Activated CD4-positive, alpha-beta memory T cell treated with anti-CD3 and anti-CD28 coated beads for 36 hours (primary cell): ENCODE measurements at regions of chr16 and their contacts with region 1.

Region 1: GRCh38 chr16:24539291-24539849 is at the start of gene RBBP6:
- DNase-seq: peak; percentile 95
- H3K4me3 Mint-ChIP-seq: peak within 1 kb of the TSS; percentile 100
- H3K27ac Mint-ChIP-seq: peak within 1 kb of the TSS; percentile 100
- H3K4me1 Mint-ChIP-seq: peaks cover 17% of the 10 kb centered on the region
- H3K27me3 Mint-ChIP-seq: no peaks in the 10 kb centered on the region
- total RNA-seq, gene RBBP6: 74.6 to 76.1 TPM

Region 2: DNA sequence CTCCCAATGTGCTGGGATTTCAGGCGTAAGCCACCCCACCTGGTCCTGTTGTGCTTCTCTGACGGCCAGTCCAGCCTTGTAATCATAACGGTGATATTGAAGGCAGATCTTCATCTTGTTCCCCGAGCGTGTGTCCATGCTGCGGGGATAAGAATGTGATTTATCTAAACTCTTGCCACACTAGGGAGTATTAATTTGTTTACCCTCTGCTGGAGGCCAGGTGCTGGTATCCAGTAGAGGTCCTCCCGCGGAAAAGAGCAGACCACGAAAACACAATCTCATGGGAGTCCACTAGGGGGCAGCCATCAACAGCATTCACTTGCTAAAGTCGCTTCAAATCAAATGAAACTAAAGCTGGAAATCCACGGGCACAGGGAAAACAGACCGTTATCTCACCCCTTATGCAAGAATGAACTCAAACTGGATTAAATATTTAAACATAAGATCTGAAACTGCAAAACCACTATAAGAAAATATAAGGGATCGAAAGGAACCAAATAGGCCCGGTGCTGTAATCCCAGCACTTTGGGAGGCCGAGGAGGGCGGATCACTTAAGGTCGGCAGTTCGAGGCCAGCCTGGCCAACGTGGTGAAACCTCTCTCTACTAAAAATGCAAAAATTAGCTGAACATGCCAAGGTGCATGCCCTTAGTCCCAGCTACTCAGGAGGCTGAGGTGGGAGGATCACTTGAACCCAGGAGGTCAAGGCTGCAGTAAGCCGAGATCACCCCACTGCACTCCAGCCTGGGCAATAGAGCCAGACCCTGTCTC is 22.3 kb before region 1 on chr16:
- CTCF ChIA-PET with region 1: interaction called, 20 read pairs
- POLR2A ChIA-PET with region 1: no interaction called
- intact Hi-C with region 1: no loop called
- DNase-seq: peak; percentile 86
- H3K4me3 Mint-ChIP-seq: no peak overlapping the region
- H3K27ac Mint-ChIP-seq: no peak overlapping the region
- H3K4me1 Mint-ChIP-seq: peaks cover 5% of the 10 kb centered on the region
- H3K27me3 Mint-ChIP-seq: peaks cover 3% of the 10 kb centered on the region

Region 3: GRCh38 chr16:24668481-24669061 is 129.2 kb after region 1 on chr16:
- CTCF ChIA-PET with region 1: interaction called, 3 read pairs
- POLR2A ChIA-PET with region 1: interaction called, 7 read pairs
- intact Hi-C with region 1: loop called (anchors 1 kb)
- DNase-seq: peak; percentile 78
- H3K4me3 Mint-ChIP-seq: peak overlapping the region; percentile 64
- H3K27ac Mint-ChIP-seq: peak overlapping the region; percentile 90
- H3K4me1 Mint-ChIP-seq: peaks cover 51% of the 10 kb centered on the region
- H3K27me3 Mint-ChIP-seq: peaks cover 8% of the 10 kb centered on the region

Region 4: GRCh38 chr16:24729362-24729984 is 190.1 kb after region 1 on chr16 and contains the start of gene TNRC6A:
- CTCF ChIA-PET with region 1: no interaction called
- POLR2A ChIA-PET with region 1: interaction called, 5 read pairs
- intact Hi-C with region 1: loop called (anchors 2 kb)
- DNase-seq: peak; percentile 88
- H3K4me3 Mint-ChIP-seq: peak within 1 kb of the TSS; percentile 98
- H3K27ac Mint-ChIP-seq: peak within 1 kb of the TSS; percentile 98
- H3K4me1 Mint-ChIP-seq: peaks cover 49% of the 10 kb centered on the region
- H3K27me3 Mint-ChIP-seq: no peaks in the 10 kb centered on the region
- total RNA-seq, gene TNRC6A: 31.7 to 36.3 TPM

Region 5: GRCh38 chr16:25014500-25015147 is 475.3 kb after region 1 on chr16:
- CTCF ChIA-PET with region 1: no interaction called
- POLR2A ChIA-PET with region 1: interaction called, 3 read pairs
- intact Hi-C with region 1: loop called (anchors 10 kb)
- DNase-seq: peak; percentile 37
- H3K4me3 Mint-ChIP-seq: peak overlapping the region; percentile 95
- H3K27ac Mint-ChIP-seq: peak overlapping the region; percentile 90
- H3K4me1 Mint-ChIP-seq: peaks cover 73% of the 10 kb centered on the region
- H3K27me3 Mint-ChIP-seq: no peaks in the 10 kb centered on the region

Region 6: DNA sequence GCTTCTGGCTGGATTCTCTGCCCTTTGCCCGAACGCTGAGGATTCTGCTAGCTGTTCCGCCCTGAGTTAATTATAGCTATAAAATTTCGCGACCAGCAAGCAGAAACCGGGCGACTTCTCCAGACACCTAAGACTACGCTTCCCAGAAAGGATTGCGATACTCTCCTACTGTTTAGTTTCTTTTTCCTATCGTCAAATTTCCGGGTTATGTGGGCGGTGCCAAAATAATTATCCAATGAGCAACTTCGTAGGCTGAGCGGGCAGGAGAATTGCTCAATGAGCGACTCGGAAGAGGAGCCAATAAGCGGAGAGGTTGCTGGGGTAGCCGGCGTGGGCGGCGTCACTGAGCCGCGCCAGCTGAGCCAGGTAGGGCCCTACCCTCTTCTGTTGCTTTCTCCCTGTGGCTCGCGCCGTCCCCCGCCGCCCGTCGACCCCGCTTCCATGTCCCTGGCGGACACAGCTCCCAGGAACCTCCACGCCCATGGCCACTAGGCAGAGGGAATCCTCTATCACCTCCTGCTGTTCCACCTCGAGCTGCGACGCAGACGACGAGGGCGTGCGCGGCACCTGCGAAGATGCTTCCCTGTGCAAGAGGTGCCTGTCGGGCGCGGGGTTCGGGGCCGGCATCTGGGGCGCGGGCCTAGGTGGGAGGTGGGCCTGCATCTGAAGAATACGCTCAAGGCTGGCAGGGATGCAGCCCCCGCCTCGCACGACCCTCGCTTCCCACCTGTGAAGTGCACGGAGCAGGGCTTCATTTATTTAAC is 572.2 kb after region 1 on chr16 and contains the start of gene LCMT1:
- CTCF ChIA-PET with region 1: no interaction called
- POLR2A ChIA-PET with region 1: no interaction called
- intact Hi-C with region 1: loop called (anchors 5 kb)
- DNase-seq: peak; percentile 96
- H3K4me3 Mint-ChIP-seq: peak within 1 kb of the TSS; percentile 95
- H3K27ac Mint-ChIP-seq: peak within 1 kb of the TSS; percentile 94
- H3K4me1 Mint-ChIP-seq: peaks cover 58% of the 10 kb centered on the region
- H3K27me3 Mint-ChIP-seq: no peaks in the 10 kb centered on the region
- total RNA-seq, gene LCMT1: 47.2 to 50.1 TPM